Activated CD8-positive, alpha-beta T cell treated with anti-CD3 and anti-CD28 coated beads for 36 hours (primary cell): ENCODE measurements at regions of chr16 and their contacts with region 1.

Region 1: DNA sequence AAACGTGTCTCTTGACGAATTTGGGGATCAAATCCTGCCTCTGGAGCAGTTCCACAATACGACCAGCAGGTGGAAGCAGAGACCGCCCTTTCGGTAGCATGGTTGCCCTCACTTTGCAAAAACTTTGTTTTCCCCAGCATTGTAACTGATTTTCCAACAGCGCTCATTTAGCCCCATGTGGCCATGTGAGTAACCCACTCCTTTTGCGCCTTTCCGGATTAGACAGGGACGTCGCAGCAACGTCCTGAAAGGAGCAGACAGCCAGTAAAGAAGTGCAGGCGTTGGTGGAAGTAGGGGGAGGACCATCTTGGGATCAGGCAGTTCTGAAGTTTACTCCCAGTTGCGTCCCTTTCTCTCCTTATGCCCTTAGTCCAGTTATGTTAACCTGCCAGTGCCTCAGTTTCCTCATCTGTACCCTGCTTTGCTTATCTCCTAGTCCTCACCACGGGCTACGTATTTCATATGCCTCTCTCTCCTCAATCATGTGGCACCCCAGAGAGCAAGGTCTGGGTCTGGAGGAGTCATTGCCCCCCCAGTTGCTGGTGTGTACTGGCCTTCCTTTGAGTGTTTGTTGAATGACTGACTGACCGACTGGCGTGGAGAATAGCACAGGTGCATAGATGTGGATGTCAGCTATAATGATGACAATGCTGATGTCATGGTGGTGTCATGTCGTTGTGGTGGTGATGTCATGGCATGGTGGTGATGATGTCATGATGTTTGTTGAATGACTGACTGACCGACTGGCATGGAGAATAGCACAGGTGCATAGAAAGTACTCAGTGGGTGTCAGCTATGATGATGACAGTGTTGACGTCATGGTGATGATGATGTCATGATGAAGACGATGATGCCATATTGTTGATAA is 22.3 kb downstream of the TMEM114 start:
- DNase-seq: peak; percentile 85
- ATAC-seq: peak; percentile 90
- H3K4me3 Mint-ChIP-seq: no peak overlapping the region
- H3K27ac Mint-ChIP-seq: no peak overlapping the region
- H3K4me1 Mint-ChIP-seq: peaks cover 2% of the 10 kb centered on the region
- H3K27me3 Mint-ChIP-seq: peaks cover 7% of the 10 kb centered on the region
- CTCF ChIP-seq: peak; percentile 96

Region 2: GRCh38 chr16:8630255-8630953 is 62.4 kb after region 1 on chr16:
- CTCF ChIA-PET with region 1: no interaction called
- POLR2A ChIA-PET with region 1: no interaction called
- intact Hi-C with region 1: no loop called
- DNase-seq: no peak
- ATAC-seq: no peak
- H3K4me3 Mint-ChIP-seq: no peak overlapping the region
- H3K27ac Mint-ChIP-seq: no peak overlapping the region
- H3K4me1 Mint-ChIP-seq: peaks cover 7% of the 10 kb centered on the region
- H3K27me3 Mint-ChIP-seq: no peaks in the 10 kb centered on the region
- CTCF ChIP-seq: no peak

Region 3: GRCh38 chr16:8797364-8798173 is 229.6 kb after region 1 on chr16 and contains the starts of genes PMM2 and TMEM186:
- CTCF ChIA-PET with region 1: no interaction called
- POLR2A ChIA-PET with region 1: interaction called, 4 read pairs
- intact Hi-C with region 1: loop called (anchors 5 kb)
- DNase-seq: peak; percentile 98
- ATAC-seq: peak; percentile 95
- H3K4me3 Mint-ChIP-seq: peak within 1 kb of the TSS; percentile 87
- H3K27ac Mint-ChIP-seq: peak within 1 kb of the TSS; percentile 96
- H3K4me1 Mint-ChIP-seq: peaks cover 40% of the 10 kb centered on the region
- H3K27me3 Mint-ChIP-seq: no peaks in the 10 kb centered on the region
- CTCF ChIP-seq: no peak
- total RNA-seq, gene PMM2: 32.7 to 34.3 TPM
- total RNA-seq, gene TMEM186: 15.3 to 15.4 TPM